ENCODE measurements at regions of chr15 and their contacts with region 1.

Region 1: GRCh38 chr15:99213187-99213811 is 36.1 kb downstream of the TTC23 start:
- DNase-seq: peak; percentile 68 to 83
- ATAC-seq: peak; percentile 57 to 80
- H3K4me3 ChIP-seq: no peak overlapping the region
- H3K27ac ChIP-seq: peak overlapping the region; percentile 54 to 81 (median 66)
- H3K4me1 ChIP-seq: peaks cover 12 to 40% of the 10 kb centered on the region in 2 donors
- H3K27me3 ChIP-seq: no peaks in the 10 kb centered on the region
- CTCF ChIP-seq: peak; percentile 87 to 96 (median 91)
- POLR2A ChIP-seq: no peak

Region 2: DNA sequence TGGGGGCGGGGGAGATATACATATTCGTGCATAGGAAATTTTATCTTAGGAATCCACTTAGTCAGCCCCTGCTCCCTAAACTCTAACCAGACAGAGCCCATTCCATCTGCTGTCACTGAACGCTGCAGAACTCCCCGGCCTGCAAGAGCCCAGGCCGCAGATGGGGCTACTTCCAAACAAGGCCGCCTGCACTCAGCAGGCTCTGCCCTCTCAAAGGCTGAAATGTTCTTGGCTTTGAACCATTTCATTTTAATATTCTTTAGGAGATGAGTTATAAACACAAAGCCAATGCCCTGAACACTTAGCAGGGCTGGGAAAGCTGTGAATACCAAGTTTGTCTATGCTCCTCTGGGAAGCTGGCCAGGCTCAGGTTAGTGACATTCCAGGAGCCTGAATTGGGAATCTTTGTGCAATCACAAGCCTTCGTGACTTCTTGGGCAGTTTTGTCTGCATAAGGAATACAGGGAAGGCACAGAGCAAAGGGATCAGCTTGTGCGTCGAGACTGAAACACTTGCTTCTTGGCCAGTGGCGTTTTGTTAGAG is 43.5 kb before region 1 on chr15:
- in situ Hi-C with region 1: no loop called
- intact Hi-C with region 1: loop called (anchors 2 kb)
- DNase-seq: peak; percentile 45 to 46
- ATAC-seq: peak; percentile 25 to 37
- H3K4me3 ChIP-seq: no peak overlapping the region
- H3K27ac ChIP-seq: peak overlapping the region; percentile 86 to 95 (median 92)
- H3K4me1 ChIP-seq: peaks cover 73 to 75% of the 10 kb centered on the region in 2 donors
- H3K27me3 ChIP-seq: no peaks in the 10 kb centered on the region
- CTCF ChIP-seq: no peak
- POLR2A ChIP-seq: no peak